Activated naive CD4-positive, alpha-beta T cell treated with anti-CD3 and anti-CD28 coated beads, Interleukin-2, amount 10 ng/mL, durations not matched to agents 7 days and 5 days (primary cell): ENCODE measurements at regions of chr19 and their contacts with region 1.

Region 1: DNA sequence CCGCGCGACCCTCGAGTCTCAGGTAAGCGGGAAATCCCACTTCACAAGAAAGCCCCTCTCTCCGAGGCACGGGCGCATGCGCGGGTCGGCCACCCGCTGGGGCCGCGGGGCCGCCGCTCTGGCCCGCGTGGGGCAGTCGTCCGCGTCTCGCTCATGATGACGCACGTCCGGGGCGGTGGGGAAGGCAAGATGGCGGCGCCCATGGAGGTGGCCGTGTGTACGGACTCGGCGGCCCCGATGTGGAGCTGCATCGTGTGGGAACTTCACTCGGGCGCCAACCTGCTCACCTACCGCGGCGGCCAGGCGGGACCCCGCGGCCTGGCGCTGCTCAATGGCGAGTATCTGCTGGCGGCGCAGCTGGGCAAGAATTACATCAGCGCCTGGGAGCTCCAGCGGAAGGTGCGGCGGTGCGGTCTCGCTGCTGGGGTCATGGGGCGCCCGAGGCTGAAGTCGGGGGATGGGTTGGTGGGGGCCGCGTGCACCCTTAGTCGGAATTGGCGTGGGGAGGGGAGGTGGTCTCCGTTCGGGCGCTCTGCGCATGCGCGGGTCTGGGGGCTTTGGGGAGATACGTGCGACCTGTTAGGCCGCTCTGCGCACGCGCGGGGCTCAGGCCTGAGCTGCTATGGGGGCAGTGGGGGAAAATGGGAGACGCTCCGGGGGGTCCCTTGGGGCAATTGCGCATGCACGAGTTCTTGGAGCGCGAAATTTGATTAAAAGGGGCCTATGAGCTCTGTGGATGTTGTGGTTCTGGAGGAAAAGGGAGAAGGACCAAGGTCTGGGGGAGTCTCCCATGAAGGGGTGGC is at the start of gene WDR18:
- DNase-seq: peak; percentile 94
- H3K4me3 Mint-ChIP-seq: peak within 1 kb of the TSS; percentile 92
- H3K27ac Mint-ChIP-seq: peak within 1 kb of the TSS; percentile 90
- H3K4me1 Mint-ChIP-seq: peaks cover 32% of the 10 kb centered on the region
- H3K27me3 Mint-ChIP-seq: peaks cover 6% of the 10 kb centered on the region

Region 2: DNA sequence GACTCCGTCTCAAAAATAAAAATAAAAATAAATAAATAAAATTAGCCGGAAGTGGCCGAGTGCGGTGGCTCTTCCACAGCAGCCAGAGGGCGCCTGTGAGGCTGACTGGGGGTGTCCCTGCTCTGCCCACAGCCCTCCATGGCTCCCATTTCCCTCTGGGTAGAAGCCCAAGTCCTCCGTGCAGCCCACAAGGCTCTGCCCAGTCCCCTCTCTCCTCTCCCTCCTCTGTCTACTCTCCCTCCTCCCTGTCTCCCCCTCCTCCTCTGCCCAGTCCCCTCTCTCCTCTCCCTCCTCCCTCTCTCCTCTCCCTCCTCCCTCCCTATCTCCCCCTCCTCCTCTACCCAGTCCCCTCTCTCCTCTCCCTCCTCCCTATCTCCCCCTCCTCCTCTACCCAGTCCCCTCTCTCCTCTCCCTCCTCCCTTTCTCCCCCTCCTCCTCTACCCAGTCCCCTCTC is 213.0 kb before region 1 on chr19:
- CTCF ChIA-PET with region 1: interaction called, 10 read pairs
- DNase-seq: peak; percentile 57
- H3K4me3 Mint-ChIP-seq: no peak overlapping the region
- H3K27ac Mint-ChIP-seq: no peak overlapping the region
- H3K4me1 Mint-ChIP-seq: peaks cover 3% of the 10 kb centered on the region
- H3K27me3 Mint-ChIP-seq: peaks cover 10% of the 10 kb centered on the region

Region 3: GRCh38 chr19:861763-862580 is 122.4 kb before region 1 on chr19:
- CTCF ChIA-PET with region 1: interaction called, 14 read pairs
- DNase-seq: peak; percentile 81
- H3K4me3 Mint-ChIP-seq: peak overlapping the region; percentile 57
- H3K27ac Mint-ChIP-seq: no peak overlapping the region
- H3K4me1 Mint-ChIP-seq: peaks cover 32% of the 10 kb centered on the region
- H3K27me3 Mint-ChIP-seq: peaks cover 46% of the 10 kb centered on the region

Region 4: DNA sequence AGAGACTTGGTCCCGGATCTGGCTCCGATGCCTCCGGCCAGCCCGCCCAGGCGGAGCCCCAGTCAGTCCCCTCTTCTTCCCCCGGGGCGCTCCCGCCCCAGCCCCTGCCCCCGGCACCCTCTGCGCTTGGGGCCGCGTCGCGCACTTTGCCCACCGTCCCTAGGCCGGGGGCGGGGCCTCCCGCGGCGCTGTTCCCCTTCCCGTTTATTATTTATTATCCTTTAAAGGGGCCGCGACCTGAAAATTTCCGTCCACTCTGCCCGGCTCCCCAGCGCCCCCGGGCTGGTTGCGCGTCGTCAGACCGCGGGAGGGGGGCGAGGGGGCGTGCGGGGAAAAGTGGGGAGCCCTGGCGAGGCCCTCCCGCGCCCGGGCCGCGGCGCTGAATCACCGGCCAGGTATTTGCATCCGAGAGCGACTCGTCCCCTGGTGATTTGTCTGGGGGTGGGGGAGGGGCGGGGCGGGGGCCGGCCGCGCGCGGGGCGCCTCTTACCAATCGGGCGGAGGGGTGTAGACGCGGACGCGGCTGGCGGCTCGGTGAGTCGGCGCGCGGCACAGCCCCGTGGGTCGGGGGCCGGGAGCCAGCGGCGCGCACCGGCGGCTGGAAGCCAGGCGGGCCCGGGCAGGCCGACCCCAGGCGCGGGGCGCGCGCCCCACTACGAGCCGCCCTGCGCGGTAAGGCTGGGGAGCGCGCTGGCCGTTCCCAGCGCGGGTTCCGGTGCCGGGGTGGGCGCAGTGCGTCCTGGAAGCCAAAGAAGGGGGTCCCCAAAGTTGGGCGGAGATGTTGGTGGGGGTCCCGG is 58.6 kb before region 1 on chr19 and contains the start of gene ARID3A:
- CTCF ChIA-PET with region 1: interaction called, 74 read pairs
- DNase-seq: peak; percentile 82
- H3K4me3 Mint-ChIP-seq: peak within 1 kb of the TSS; percentile 82
- H3K27ac Mint-ChIP-seq: peak within 1 kb of the TSS; percentile 83
- H3K4me1 Mint-ChIP-seq: peaks cover 27% of the 10 kb centered on the region
- H3K27me3 Mint-ChIP-seq: peaks cover 16% of the 10 kb centered on the region